Activated CD4-positive, alpha-beta T cell treated with anti-CD3 and anti-CD28 coated beads for 36 hours (primary cell): ENCODE measurements at regions of chr3 and their contacts with region 1.

Region 1: DNA sequence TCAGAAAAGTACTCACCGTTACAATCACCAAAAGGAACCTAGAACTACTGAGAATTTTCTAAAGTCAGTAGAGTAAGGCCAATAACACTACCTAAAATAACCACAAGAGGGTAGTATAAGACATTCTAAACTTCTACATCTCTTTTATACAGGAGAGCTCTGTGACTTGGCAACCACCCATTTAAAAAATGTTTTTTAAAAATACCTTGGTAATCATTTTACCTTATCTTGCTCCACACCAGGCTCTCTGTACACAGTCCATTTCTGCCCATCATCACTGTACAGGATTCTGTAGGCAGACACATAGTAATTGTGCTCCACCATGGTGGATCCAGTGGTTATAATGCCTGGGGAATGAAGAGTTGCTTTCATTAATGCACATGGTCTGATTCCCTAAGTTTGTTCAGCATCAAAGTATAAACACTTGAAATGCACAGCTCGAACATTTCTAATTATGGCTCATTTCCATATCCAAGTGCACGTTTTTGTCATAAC is 54.5 kb downstream of the ST3GAL6 start:
- DNase-seq: no peak
- ATAC-seq: peak; percentile 73
- H3K4me3 Mint-ChIP-seq: no peak overlapping the region
- H3K27ac Mint-ChIP-seq: no peak overlapping the region
- H3K4me1 Mint-ChIP-seq: no peaks in the 10 kb centered on the region
- H3K27me3 Mint-ChIP-seq: no peaks in the 10 kb centered on the region

Region 2: GRCh38 chr3:96915465-96915864 is 1902.1 kb before region 1 on chr3:
- CTCF ChIA-PET with region 1: no interaction called
- POLR2A ChIA-PET with region 1: no interaction called
- intact Hi-C with region 1: no loop called
- DNase-seq: no peak
- ATAC-seq: no peak
- H3K4me3 Mint-ChIP-seq: no peak overlapping the region
- H3K27ac Mint-ChIP-seq: no peak overlapping the region
- H3K4me1 Mint-ChIP-seq: no peaks in the 10 kb centered on the region
- H3K27me3 Mint-ChIP-seq: no peaks in the 10 kb centered on the region

Region 3: GRCh38 chr3:98329392-98330124 is 488.0 kb before region 1 on chr3:
- CTCF ChIA-PET with region 1: no interaction called
- POLR2A ChIA-PET with region 1: no interaction called
- intact Hi-C with region 1: loop called in 1 of 2 experiments (anchors 2 kb)
- DNase-seq: peak; percentile 60
- ATAC-seq: peak; percentile 67
- H3K4me3 Mint-ChIP-seq: no peak overlapping the region
- H3K27ac Mint-ChIP-seq: no peak overlapping the region
- H3K4me1 Mint-ChIP-seq: no peaks in the 10 kb centered on the region
- H3K27me3 Mint-ChIP-seq: peaks cover 19% of the 10 kb centered on the region

Region 4: GRCh38 chr3:98994128-98994762 is 176.7 kb after region 1 on chr3:
- CTCF ChIA-PET with region 1: interaction called, 10 read pairs
- POLR2A ChIA-PET with region 1: no interaction called
- intact Hi-C with region 1: loop called (anchors 2 kb)
- DNase-seq: no peak
- ATAC-seq: no peak
- H3K4me3 Mint-ChIP-seq: no peak overlapping the region
- H3K27ac Mint-ChIP-seq: no peak overlapping the region
- H3K4me1 Mint-ChIP-seq: no peaks in the 10 kb centered on the region
- H3K27me3 Mint-ChIP-seq: peaks cover 3% of the 10 kb centered on the region

Region 5: GRCh38 chr3:99172736-99173657 is 355.4 kb after region 1 on chr3:
- CTCF ChIA-PET with region 1: interaction called, 6 read pairs
- POLR2A ChIA-PET with region 1: no interaction called
- intact Hi-C with region 1: loop called (anchors 1 kb)
- DNase-seq: peak; percentile 61
- ATAC-seq: peak; percentile 39
- H3K4me3 Mint-ChIP-seq: no peak overlapping the region
- H3K27ac Mint-ChIP-seq: no peak overlapping the region
- H3K4me1 Mint-ChIP-seq: no peaks in the 10 kb centered on the region
- H3K27me3 Mint-ChIP-seq: no peaks in the 10 kb centered on the region

Region 6: GRCh38 chr3:99686955-99687612 is 869.5 kb after region 1 on chr3:
- CTCF ChIA-PET with region 1: no interaction called
- POLR2A ChIA-PET with region 1: no interaction called
- intact Hi-C with region 1: loop called (anchors 5 to 10 kb)
- DNase-seq: peak; percentile 75
- ATAC-seq: no peak
- H3K4me3 Mint-ChIP-seq: no peak overlapping the region
- H3K27ac Mint-ChIP-seq: no peak overlapping the region
- H3K4me1 Mint-ChIP-seq: no peaks in the 10 kb centered on the region
- H3K27me3 Mint-ChIP-seq: peaks cover 7% of the 10 kb centered on the region

Region 7: GRCh38 chr3:99808151-99808794 is 990.7 kb after region 1 on chr3:
- CTCF ChIA-PET with region 1: interaction called, 3 read pairs
- POLR2A ChIA-PET with region 1: no interaction called
- intact Hi-C with region 1: loop called in 1 of 2 experiments (anchors 5 kb)
- DNase-seq: peak; percentile 51
- ATAC-seq: no peak
- H3K4me3 Mint-ChIP-seq: no peak overlapping the region
- H3K27ac Mint-ChIP-seq: no peak overlapping the region
- H3K4me1 Mint-ChIP-seq: no peaks in the 10 kb centered on the region
- H3K27me3 Mint-ChIP-seq: no peaks in the 10 kb centered on the region